GM18951 (cell line): ENCODE measurements at regions of chr19 and their contacts with region 1.

Region 1: DNA sequence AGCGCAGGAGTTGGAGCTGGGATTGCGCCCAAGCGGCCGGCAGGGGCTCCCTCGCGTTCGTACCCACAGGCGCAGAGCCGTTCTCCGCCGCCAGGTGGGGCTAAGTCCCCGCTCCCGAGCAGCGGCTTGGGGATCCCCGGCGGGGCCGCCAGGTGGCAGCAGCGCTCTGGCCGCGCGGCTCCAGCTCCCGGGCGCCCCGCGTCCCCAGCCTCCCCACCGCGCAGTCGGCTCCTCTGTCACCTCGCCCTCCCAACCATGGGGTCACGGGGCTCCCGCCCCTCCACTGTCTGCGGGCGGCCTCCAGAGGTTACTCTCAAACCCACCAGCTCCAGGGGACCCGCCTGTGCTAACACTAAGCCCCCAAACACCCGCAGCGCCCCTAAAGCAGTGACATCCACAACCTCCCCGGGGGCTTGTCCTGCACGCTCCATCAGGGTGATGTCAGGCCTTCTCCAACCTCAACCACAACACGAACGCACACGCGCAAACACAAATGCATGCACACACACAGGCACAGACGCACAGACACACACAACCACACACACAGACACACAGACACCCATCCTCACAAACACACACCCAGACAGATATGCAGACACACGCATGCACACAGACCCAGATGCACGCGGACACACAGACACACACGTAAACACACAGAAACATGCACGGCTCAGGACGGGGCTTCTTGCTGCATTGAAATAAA is 18.4 kb upstream of the KCTD15 start:
- POLR2A ChIP-seq: no peak

Region 2: GRCh38 chr19:33429891-33430673 is 348.2 kb before region 1 on chr19:
- in situ Hi-C with region 1: loop called (anchors 10 kb)
- POLR2A ChIP-seq: no peak

Region 3: GRCh38 chr19:34096020-34096915 is 318.0 kb after region 1 on chr19:
- in situ Hi-C with region 1: loop called (anchors 10 kb)
- POLR2A ChIP-seq: no peak